Heart left ventricle (tissue), 16 donors: ENCODE measurements at regions of chr3 and their contacts with region 1.

Region 1: DNA sequence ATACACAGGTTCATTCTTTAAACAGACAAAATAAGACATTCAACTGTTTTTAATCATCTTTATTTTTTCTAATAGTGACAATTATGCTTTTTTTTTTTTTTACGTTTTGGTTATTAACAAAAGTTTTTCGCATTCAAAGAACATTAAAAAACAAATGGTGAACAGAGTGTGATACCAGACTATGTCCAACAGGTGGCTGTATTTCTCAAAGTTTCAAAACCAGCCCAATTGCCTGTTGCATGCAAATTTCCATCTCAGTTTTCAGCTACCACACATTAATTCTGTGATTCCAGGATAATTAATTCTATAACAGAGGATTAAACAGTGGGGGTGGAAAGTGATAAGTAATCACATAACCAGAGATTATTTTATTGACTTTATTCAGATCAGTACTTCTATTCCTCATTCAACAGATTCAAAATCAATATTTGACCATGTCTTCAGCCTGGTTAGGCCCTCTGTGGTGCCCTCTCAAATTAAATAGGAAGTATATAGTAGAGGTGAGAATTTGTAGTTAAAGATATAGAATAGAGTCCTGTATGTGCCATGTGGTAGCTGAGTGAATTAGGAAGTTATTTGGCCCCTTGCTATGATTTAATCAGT is 122.2 kb upstream of the DCBLD2 start:
- DNase-seq: no peak
- ATAC-seq: no peak
- H3K4me3 ChIP-seq: no peak overlapping the region
- H3K27ac ChIP-seq: no peak overlapping the region
- H3K4me1 ChIP-seq: no peaks in the 10 kb centered on the region
- H3K27me3 ChIP-seq: no peaks in the 10 kb centered on the region
- CTCF ChIP-seq: peak; percentile 46 to 78 (median 70)
- POLR2A ChIP-seq: no peak

Region 2: GRCh38 chr3:99172736-99173657 is 149.3 kb after region 1 on chr3:
- intact Hi-C with region 1: loop called in 7 of 10 experiments (anchors 5 to 10 kb)
- DNase-seq: peak in 3 of 5 donors; percentile 23 to 38 (median 36)
- ATAC-seq: peak in 2 of 4 donors; percentile 39 to 46
- H3K4me3 ChIP-seq: no peak overlapping the region
- H3K27ac ChIP-seq: no peak overlapping the region
- H3K4me1 ChIP-seq: no peaks in the 10 kb centered on the region
- H3K27me3 ChIP-seq: no peaks in the 10 kb centered on the region
- CTCF ChIP-seq: peak; percentile 10 to 74 (median 50)
- POLR2A ChIP-seq: no peak

Region 3: GRCh38 chr3:99753268-99753975 is 729.7 kb after region 1 on chr3:
- intact Hi-C with region 1: loop called (anchors 2 to 10 kb)
- DNase-seq: peak in 2 of 5 donors; percentile 15 to 27
- ATAC-seq: peak; percentile 69 to 86 (median 77)
- H3K4me3 ChIP-seq: no peak overlapping the region
- H3K27ac ChIP-seq: no peak overlapping the region
- H3K4me1 ChIP-seq: peaks cover 0 to 20% (median 1%) of the 10 kb centered on the region in 12 donors
- H3K27me3 ChIP-seq: no peaks in the 10 kb centered on the region
- CTCF ChIP-seq: peak; percentile 57 to 82 (median 71)
- POLR2A ChIP-seq: no peak

Region 4: GRCh38 chr3:99789011-99789721 is 765.5 kb after region 1 on chr3:
- intact Hi-C with region 1: loop called in 1 of 10 experiments (anchors 10 kb)
- DNase-seq: peak in 3 of 5 donors; percentile 15 to 34 (median 25)
- ATAC-seq: peak; percentile 80 to 95 (median 94)
- H3K4me3 ChIP-seq: no peak overlapping the region
- H3K27ac ChIP-seq: peak overlapping the region in 1 of 12 donors; percentile 9
- H3K4me1 ChIP-seq: peaks cover 0 to 7% (median 0%) of the 10 kb centered on the region in 12 donors
- H3K27me3 ChIP-seq: no peaks in the 10 kb centered on the region
- CTCF ChIP-seq: peak; percentile 40 to 73 (median 64)
- POLR2A ChIP-seq: no peak

Region 5: DNA sequence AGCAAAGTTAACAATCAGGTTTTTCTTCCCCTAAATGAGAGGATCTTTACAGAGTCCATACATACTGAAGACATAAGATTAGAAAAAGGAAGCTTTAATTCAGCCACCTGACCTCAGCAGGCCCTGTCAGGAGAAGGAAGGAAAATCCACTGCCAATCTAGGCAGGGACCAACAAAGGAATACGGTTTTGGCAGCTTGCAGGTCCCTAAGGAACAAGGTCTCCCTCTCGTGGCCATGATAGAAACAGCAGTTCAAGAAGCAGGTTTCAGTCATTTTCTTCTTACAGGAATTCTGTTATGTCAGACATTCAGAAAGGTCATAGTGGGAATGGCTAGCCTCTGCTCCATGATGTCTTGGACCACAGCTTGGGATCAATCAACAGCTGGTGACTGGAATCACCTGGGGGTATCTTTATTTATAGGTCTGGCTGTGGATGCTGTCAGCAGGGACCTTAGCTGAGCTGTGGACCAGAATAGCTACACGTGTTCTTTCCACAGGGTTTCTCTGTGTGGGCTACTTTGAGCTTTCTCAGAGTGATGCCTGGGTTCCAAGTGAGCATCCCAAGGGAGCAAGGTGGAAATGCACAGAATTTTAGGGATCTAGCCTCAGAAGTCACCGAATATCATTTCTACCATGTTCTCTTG is 784.6 kb after region 1 on chr3:
- intact Hi-C with region 1: loop called in 2 of 10 experiments (anchors 5 kb)
- DNase-seq: peak in 2 of 5 donors; percentile 35 to 36
- ATAC-seq: peak in 3 of 4 donors; percentile 52 to 66 (median 60)
- H3K4me3 ChIP-seq: no peak overlapping the region
- H3K27ac ChIP-seq: no peak overlapping the region
- H3K4me1 ChIP-seq: peaks cover 0 to 5% (median 0%) of the 10 kb centered on the region in 12 donors
- H3K27me3 ChIP-seq: no peaks in the 10 kb centered on the region
- CTCF ChIP-seq: peak; percentile 69 to 87 (median 76)
- POLR2A ChIP-seq: no peak